ENCODE measurements at regions of chr12 and their contacts with region 1.

Region 1: GRCh38 chr12:21697904-21698630 is 40.4 kb upstream of the LDHB start:
- DNase-seq: no peak
- H3K4me3 ChIP-seq: peak overlapping the region in 1 of 4 donors; percentile 19
- H3K27ac ChIP-seq: no peak overlapping the region
- H3K4me1 ChIP-seq: peaks cover 0 to 5% (median 2%) of the 10 kb centered on the region in 4 donors
- H3K27me3 ChIP-seq: no peaks in the 10 kb centered on the region
- CTCF ChIP-seq: peak; percentile 43 to 71 (median 53)
- EP300 ChIP-seq: no peak
- POLR2A ChIP-seq: no peak

Region 2: GRCh38 chr12:21831791-21832344 is 133.8 kb after region 1 on chr12:
- intact Hi-C with region 1: loop called (anchors 10 kb)
- DNase-seq: peak; percentile 89
- H3K4me3 ChIP-seq: no peak overlapping the region
- H3K27ac ChIP-seq: peak overlapping the region; percentile 59 to 74 (median 68)
- H3K4me1 ChIP-seq: peaks cover 0 to 53% (median 28%) of the 10 kb centered on the region in 4 donors
- H3K27me3 ChIP-seq: no peaks in the 10 kb centered on the region
- CTCF ChIP-seq: no peak
- EP300 ChIP-seq: peak in 1 of 4 donors; percentile 54
- POLR2A ChIP-seq: no peak

Region 3: DNA sequence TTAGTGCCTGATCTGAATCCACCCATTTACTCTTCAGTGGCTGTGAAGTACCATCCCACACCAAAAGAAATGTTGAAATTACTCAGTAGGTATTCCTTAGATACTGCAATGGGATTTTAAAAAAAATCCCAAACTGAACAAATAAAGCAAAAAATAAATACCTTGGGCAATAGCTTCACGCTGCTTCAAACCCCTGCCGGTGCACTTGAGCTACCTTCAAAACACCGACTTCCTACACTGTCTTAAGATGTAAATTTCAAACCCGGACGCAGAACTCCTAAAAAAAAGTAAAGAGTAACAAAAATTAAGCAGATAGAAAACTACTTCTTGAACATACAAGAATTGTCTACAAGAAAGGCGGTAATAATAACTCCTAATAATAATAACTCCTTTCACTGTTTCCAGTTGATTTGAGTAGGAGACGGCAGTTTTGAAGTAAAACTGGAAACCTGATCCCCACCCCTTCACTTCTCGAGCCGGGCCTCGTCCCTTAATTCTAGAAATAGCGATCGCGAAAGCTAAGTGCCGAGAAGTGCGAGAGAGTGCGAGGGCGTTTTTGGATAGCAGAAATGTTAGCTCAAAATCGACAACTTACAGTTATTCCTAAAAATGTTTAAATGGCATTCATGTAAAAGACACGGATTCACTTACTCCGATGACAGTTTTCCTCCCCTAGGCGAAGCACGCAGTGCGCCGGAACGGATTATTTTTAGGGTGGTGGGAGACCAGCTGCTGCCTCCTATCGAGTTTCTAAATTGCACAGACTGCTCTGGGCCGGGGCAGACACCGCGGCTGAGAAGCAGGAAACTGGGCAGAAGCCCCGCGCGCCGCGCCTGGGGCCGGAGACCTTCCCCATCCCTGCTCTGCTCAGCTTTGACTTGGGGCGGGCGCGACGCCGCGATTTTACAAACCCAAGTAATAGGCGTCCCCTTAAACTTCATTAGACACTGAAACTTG is 242.8 kb after region 1 on chr12 and contains the start of gene ABCC9:
- intact Hi-C with region 1: loop called (anchors 2 kb)
- DNase-seq: peak; percentile 81
- H3K4me3 ChIP-seq: peak within 1 kb of the TSS; percentile 45 to 61 (median 59)
- H3K27ac ChIP-seq: peak within 1 kb of the TSS; percentile 81 to 89 (median 86)
- H3K4me1 ChIP-seq: peaks cover 0 to 17% (median 14%) of the 10 kb centered on the region in 4 donors
- H3K27me3 ChIP-seq: no peaks in the 10 kb centered on the region
- CTCF ChIP-seq: no peak
- EP300 ChIP-seq: no peak
- POLR2A ChIP-seq: peak; percentile 29 to 33
- total RNA-seq, gene ABCC9: 28.2 to 39.2 (median 34.0) TPM

Region 4: DNA sequence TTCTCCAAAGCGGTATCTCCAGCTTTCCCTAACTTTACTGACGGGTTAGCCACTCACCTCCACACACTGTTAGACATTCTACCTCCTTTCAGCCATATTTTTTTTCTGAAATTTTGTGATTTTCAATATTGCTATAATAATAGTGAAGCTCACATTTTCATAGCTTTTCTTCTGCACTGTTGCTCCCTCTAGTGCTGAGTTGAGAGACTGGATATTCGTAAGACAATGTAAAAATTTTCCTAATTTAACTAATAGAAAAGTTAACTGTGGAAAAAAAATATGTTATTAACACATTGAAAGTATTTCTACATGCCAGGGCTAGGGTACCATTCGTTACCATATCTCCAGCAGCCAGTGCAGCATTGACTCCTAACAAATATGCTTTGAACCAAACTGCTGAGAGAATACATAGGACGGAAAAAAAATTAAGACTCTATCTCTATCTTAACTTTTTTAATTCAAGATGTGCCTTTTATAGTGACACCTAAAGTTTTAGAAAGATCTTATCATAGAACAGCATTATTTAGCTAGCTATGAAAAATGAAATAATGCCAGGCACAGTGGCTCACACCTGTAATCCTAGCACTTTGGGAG is 291.8 kb after region 1 on chr12:
- intact Hi-C with region 1: loop called (anchors 1 kb)
- DNase-seq: no peak
- H3K4me3 ChIP-seq: no peak overlapping the region
- H3K27ac ChIP-seq: no peak overlapping the region
- H3K4me1 ChIP-seq: no peaks in the 10 kb centered on the region
- H3K27me3 ChIP-seq: no peaks in the 10 kb centered on the region
- CTCF ChIP-seq: peak; percentile 45 to 62 (median 56)
- EP300 ChIP-seq: no peak
- POLR2A ChIP-seq: no peak

Region 5: GRCh38 chr12:22018860-22019259 is 320.8 kb after region 1 on chr12:
- intact Hi-C with region 1: loop called (anchors 2 kb)
- DNase-seq: no peak
- H3K4me3 ChIP-seq: no peak overlapping the region
- H3K27ac ChIP-seq: no peak overlapping the region
- H3K4me1 ChIP-seq: no peaks in the 10 kb centered on the region
- H3K27me3 ChIP-seq: no peaks in the 10 kb centered on the region
- CTCF ChIP-seq: peak in 3 of 4 experiments; percentile 13 to 39 (median 14)
- EP300 ChIP-seq: no peak
- POLR2A ChIP-seq: no peak